CD14-positive monocyte (primary cell): ENCODE measurements at regions of chr13 and their contacts with region 1.

Region 1: DNA sequence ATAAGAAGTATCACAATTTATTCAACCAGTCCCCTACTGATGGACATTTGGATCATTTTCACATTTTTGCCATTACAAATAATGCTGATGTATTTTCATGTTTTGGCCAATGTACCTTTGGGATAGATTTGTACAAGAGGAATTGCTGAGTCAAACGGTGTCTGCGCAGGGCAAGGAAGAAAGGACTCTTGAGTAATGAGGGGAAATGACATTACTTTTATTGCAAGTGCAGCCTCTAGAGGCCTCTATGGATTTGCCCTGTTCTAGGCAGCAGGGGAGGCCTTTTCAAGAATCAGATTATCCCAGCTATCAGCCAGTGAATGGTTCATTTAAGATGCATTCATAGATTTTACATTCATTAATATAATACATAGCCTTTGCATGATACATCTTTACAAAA is 32.9 kb upstream of the GTF3A start:
- DNase-seq: peak in 2 of 3 donors; percentile 17 to 26
- H3K4me3 ChIP-seq: no peak overlapping the region
- H3K4me3 Mint-ChIP-seq: no peak overlapping the region
- H3K27ac ChIP-seq: no peak overlapping the region
- H3K27ac Mint-ChIP-seq: no peak overlapping the region
- H3K4me1 ChIP-seq: peaks cover 6 to 9% of the 10 kb centered on the region in 2 donors
- H3K4me1 Mint-ChIP-seq: peaks cover 4% of the 10 kb centered on the region
- H3K27me3 ChIP-seq: no peaks in the 10 kb centered on the region
- H3K27me3 Mint-ChIP-seq: peaks cover 0 to 4% (median 2%) of the 10 kb centered on the region in 3 donors
- CTCF ChIP-seq: no peak

Region 2: GRCh38 chr13:27341616-27342015 is 49.9 kb before region 1 on chr13:
- intact Hi-C with region 1: no loop called
- DNase-seq: no peak
- H3K4me3 ChIP-seq: no peak overlapping the region
- H3K4me3 Mint-ChIP-seq: no peak overlapping the region
- H3K27ac ChIP-seq: no peak overlapping the region
- H3K27ac Mint-ChIP-seq: no peak overlapping the region
- H3K4me1 ChIP-seq: no peaks in the 10 kb centered on the region
- H3K4me1 Mint-ChIP-seq: no peaks in the 10 kb centered on the region
- H3K27me3 ChIP-seq: no peaks in the 10 kb centered on the region
- H3K27me3 Mint-ChIP-seq: peaks cover 3 to 15% (median 9%) of the 10 kb centered on the region in 3 donors
- CTCF ChIP-seq: no peak

Region 3: DNA sequence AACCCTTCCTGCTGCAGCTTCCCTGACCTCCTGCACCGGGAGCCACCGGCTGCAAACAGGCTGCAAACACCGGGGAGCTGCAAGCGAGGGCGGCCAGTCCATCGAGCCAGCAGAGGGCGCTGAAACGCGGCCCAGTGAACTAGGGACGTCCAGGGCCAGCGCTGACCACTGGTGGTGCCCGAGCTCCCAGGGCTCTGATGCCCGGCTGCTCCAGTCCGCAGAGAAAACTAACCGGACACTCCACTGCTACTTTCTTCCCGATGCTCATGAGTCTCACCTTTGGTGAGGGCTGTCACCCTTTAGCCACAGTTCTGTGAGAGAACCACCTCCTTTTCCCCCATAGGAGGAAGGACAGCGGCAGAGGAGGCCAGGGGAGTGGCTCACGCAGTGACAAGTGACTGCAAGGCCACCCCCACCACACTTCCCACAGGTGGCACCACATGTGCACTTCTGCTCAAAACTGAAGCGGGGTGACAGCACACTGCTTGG is 141.7 kb after region 1 on chr13:
- intact Hi-C with region 1: loop called in 1 of 2 experiments (anchors 5 kb)
- DNase-seq: peak; percentile 63 to 71 (median 68)
- H3K4me3 ChIP-seq: peak overlapping the region in 2 of 3 experiments; percentile 20 to 64
- H3K4me3 Mint-ChIP-seq: peak overlapping the region; percentile 72 to 85
- H3K27ac ChIP-seq: no peak overlapping the region
- H3K27ac Mint-ChIP-seq: peak overlapping the region in 2 of 7 donors; percentile 30 to 73
- H3K4me1 ChIP-seq: peaks cover 4 to 8% of the 10 kb centered on the region in 2 donors
- H3K4me1 Mint-ChIP-seq: peaks cover 6% of the 10 kb centered on the region
- H3K27me3 ChIP-seq: no peaks in the 10 kb centered on the region
- H3K27me3 Mint-ChIP-seq: peaks cover 1 to 7% (median 6%) of the 10 kb centered on the region in 3 donors
- CTCF ChIP-seq: peak; percentile 96